ENCODE measurements at regions of chr1 and their contacts with region 1.

Region 1: DNA sequence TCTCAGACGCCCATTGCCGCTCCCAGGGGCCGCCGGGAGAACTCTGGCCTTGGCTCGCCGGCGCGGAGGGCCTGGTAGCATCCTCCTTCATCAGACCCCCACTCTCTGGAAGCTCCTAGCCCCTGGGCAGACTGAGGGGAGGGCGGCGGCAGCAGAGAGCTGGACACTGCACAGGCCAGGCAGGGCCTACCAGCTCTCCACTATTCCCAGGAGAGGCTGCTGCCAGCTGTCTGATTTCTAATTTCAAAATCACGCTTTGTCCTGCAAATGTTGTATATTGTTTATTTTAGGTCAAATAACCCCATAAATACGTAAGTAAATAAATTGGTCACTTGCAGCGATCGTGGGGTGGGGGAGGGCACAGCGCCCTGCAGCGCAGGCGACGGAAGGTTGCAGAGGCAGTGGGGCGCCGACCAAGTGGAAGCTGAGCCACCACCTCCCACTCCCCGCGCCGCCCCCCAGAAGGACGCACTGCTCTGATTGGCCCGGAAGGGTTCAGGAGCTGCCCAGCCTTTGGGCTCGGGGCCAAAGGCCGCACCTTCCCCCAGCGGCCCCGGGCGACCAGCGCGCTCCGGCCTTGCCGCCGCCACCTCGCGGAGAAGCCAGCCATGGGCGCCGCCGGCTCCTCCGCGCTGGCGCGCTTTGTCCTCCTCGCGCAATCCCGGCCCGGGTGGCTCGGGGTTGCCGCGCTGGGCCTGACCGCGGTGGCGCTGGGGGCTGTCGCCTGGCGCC is at the start of gene MTARC1:
- DNase-seq: peak; percentile 91
- ATAC-seq: peak; percentile 79
- H3K4me3 ChIP-seq: peak within 1 kb of the TSS; percentile 65
- H3K27ac ChIP-seq: peak within 1 kb of the TSS; percentile 90
- H3K4me1 ChIP-seq: peaks cover 47% of the 10 kb centered on the region
- H3K27me3 ChIP-seq: no peaks in the 10 kb centered on the region
- CTCF ChIP-seq: 0 out of 2 replicates have a peak, but pooled peaks have one; percentile 26
- total RNA-seq, gene MTARC1: 48.5 and 50.2 TPM in 2 replicates

Region 2: GRCh38 chr1:220235462-220235861 is 551.0 kb before region 1 on chr1:
- CTCF ChIA-PET with region 1: no interaction called
- POLR2A ChIA-PET with region 1: no interaction called
- intact Hi-C with region 1: loop called (anchors 10 kb)
- DNase-seq: peak; percentile 92
- ATAC-seq: peak; percentile 98
- H3K4me3 ChIP-seq: no peak overlapping the region; the same call in 1 of the 2 replicates
- H3K27ac ChIP-seq: peak overlapping the region; percentile 81
- H3K4me1 ChIP-seq: peaks cover 29% of the 10 kb centered on the region
- H3K27me3 ChIP-seq: no peaks in the 10 kb centered on the region
- CTCF ChIP-seq: no peak

Region 3: DNA sequence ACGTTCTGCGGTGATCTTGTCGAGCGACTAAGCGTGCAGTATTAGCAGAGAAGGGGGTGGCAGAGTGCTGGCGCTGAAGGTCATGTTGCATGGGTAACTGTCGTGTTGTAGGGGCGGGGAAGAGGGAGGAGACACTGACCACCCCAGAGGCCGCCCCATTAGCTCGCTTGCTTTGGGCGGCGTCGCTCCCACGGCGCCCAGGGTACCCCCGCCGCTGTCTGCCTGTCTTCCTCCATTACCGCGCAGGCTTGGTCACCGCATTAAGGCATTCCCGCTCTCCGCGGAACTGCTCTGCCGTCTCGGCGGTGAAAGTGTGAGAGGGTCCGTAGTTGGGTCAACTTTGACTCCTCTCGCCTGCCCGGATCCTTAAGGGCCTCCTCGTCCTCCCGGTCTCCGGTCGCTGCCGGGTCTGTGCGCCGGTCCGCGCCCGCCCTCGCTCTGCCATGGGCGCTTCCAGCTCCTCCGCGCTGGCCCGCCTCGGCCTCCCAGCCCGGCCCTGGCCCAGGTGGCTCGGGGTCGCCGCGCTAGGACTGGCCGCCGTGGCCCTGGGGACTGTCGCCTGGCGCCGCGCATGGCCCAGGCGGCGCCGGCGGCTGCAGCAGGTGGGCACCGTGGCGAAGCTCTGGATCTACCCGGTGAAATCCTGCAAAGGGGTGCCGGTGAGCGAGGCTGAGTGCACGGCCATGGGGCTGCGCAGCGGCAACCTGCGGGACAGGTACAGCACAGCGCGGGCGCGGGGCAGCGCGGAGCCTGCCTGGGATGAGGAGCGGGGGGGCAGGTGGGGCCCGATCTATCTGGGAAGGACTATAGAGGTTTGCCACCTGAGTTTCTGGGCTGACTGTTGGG is 38.2 kb before region 1 on chr1 and contains the start of gene MTARC2:
- CTCF ChIA-PET with region 1: no interaction called
- POLR2A ChIA-PET with region 1: no interaction called
- intact Hi-C with region 1: loop called (anchors 2 kb)
- DNase-seq: peak; percentile 85
- ATAC-seq: peak; percentile 93
- H3K4me3 ChIP-seq: peak within 1 kb of the TSS; percentile 88
- H3K27ac ChIP-seq: peak within 1 kb of the TSS; percentile 17
- H3K4me1 ChIP-seq: peaks cover 34% of the 10 kb centered on the region
- H3K27me3 ChIP-seq: no peaks in the 10 kb centered on the region
- CTCF ChIP-seq: no peak
- total RNA-seq, gene MTARC2: 13.3 and 17.7 TPM in 2 replicates

Region 4: GRCh38 chr1:220803401-220804201 is 17.1 kb after region 1 on chr1:
- CTCF ChIA-PET with region 1: interaction called, 3 read pairs
- POLR2A ChIA-PET with region 1: interaction called, 3 read pairs
- intact Hi-C with region 1: loop called (anchors 2 kb)
- DNase-seq: peak; percentile 64
- ATAC-seq: peak; percentile 77
- H3K4me3 ChIP-seq: no peak overlapping the region
- H3K27ac ChIP-seq: no peak overlapping the region
- H3K4me1 ChIP-seq: no peaks in the 10 kb centered on the region
- H3K27me3 ChIP-seq: no peaks in the 10 kb centered on the region
- CTCF ChIP-seq: peak; percentile 98

Region 5: DNA sequence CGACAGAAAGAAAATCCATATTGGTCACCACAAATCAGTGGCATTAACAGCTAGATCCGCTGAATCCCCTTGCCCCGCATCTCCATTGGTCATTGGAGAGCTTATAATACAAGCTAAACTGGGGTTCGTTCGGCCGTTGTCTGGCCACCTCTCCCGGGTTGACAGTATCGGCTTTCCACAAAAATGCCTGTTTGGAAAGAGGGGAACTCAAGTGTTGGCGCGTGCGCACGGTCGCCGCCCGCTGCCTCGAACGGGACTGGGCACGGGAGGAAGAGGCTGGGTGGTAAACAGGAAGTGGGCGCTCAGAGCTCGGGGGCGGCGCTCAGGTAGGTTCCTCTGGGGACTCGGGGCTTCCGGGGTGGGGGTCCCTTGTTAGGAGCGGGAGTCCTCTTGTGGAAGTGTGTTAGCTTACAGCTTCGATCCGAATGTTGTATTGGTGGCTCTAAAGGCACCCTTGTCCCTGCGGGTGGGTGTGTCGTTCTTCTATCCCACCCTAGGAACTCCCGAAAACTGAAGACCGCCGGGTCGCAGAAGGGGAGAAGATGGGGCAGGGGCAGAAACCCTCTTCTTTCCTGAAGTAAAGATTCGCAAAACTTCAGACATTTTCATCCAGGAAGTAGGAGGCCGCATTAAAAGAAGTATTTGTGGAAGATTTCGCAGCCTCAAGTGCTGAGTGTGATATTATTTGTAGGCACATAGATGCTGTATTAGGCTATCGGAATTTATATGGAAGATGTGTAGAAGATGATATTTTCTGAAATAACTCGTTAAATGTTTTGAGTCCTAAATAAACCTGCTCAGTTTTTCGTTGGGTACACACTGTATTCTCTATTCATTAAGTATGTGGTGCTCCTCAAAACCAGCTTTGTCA is 1926.8 kb after region 1 on chr1:
- CTCF ChIA-PET with region 1: no interaction called
- POLR2A ChIA-PET with region 1: no interaction called
- intact Hi-C with region 1: loop called (anchors 5 kb)
- DNase-seq: peak; percentile 99
- ATAC-seq: peak; percentile 63
- H3K4me3 ChIP-seq: peak overlapping the region; percentile 79
- H3K27ac ChIP-seq: peak overlapping the region; percentile 78
- H3K4me1 ChIP-seq: peaks cover 19% of the 10 kb centered on the region
- H3K27me3 ChIP-seq: no peaks in the 10 kb centered on the region
- CTCF ChIP-seq: no peak

Measured in PC-3 (cell line).